ENCODE measurements at regions of chr22 and their contacts with region 1.

Region 1: DNA sequence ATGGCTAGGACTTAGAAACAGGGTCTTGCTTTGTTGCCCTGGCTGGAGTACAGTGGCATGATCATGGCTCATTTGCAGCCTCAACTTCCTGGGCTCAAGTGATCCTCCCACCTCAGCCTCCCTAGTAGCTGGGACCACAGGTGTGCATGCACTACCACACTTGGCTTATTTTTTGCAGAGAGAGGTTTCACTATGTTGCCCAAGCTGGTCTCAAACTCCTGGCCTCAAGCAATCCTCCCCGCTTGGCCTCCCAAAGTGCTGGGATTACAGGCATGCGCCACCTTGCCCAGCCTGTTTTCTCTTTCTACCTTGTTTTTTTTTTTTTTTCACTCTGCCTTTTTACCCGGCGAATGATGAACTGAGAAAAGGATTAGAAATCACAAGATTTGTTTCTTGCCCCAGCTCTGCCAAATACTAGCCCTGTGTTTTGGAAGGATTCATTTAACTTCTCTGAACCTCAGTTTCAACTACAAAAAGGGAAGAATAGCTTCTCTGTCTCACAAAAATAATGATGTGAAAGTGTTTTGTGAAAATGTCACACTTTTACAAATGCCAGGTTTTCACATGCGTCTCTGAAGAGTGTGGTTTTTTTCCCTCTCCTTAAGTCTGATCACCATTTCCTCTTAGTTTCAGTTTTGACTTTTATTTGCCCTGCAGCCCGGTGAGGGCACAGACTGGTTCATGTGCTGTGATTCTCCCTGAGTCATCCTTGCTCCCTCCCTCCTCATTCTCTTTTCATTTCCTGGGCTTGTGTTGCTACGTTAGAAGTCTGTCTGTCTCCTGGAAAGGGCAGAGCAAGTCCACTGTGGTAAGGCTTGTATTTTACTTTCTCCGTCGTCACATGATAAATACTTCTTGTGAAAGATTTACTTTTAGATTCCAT is 67.7 kb downstream of the BCL2L13 start:
- DNase-seq: peak; percentile 67
- H3K4me3 Mint-ChIP-seq: peak overlapping the region; percentile 49
- H3K27ac Mint-ChIP-seq: peak overlapping the region; percentile 89
- H3K4me1 Mint-ChIP-seq: peaks cover 20% of the 10 kb centered on the region
- H3K27me3 Mint-ChIP-seq: no peaks in the 10 kb centered on the region

Region 2: GRCh38 chr22:17628304-17629166 is 77.7 kb before region 1 on chr22 and contains the start of gene ATP6V1E1:
- CTCF ChIA-PET with region 1: no interaction called
- intact Hi-C with region 1: loop called (anchors 5 kb)
- DNase-seq: peak; percentile 98
- H3K4me3 Mint-ChIP-seq: peak within 1 kb of the TSS; percentile 98
- H3K27ac Mint-ChIP-seq: peak within 1 kb of the TSS; percentile 92
- H3K4me1 Mint-ChIP-seq: peaks cover 26% of the 10 kb centered on the region
- H3K27me3 Mint-ChIP-seq: no peaks in the 10 kb centered on the region
- total RNA-seq, gene ATP6V1E1: 74.5 to 75.5 TPM

Region 3: DNA sequence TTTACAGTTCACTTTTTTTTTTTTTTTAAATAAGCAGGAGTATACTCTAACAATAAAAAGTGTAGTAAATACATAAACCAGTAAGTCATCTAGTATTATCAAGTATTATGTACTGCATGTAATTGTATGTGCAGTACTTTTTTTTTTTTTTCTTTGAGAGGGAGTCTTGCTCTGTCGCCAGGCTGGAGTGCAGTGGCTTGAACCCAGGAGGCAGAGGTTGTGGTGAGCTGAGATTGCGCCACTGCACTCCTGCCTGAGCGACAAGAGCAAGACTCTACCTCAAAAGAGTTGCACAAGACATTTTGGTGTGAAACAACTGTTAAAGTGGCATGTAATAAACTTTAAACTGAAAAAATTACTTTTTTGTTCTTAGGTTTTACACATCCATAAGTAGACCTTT is 51.0 kb before region 1 on chr22:
- CTCF ChIA-PET with region 1: no interaction called
- intact Hi-C with region 1: no loop called
- DNase-seq: no peak
- H3K4me3 Mint-ChIP-seq: no peak overlapping the region
- H3K27ac Mint-ChIP-seq: no peak overlapping the region
- H3K4me1 Mint-ChIP-seq: peaks cover 3% of the 10 kb centered on the region
- H3K27me3 Mint-ChIP-seq: no peaks in the 10 kb centered on the region

Region 4: DNA sequence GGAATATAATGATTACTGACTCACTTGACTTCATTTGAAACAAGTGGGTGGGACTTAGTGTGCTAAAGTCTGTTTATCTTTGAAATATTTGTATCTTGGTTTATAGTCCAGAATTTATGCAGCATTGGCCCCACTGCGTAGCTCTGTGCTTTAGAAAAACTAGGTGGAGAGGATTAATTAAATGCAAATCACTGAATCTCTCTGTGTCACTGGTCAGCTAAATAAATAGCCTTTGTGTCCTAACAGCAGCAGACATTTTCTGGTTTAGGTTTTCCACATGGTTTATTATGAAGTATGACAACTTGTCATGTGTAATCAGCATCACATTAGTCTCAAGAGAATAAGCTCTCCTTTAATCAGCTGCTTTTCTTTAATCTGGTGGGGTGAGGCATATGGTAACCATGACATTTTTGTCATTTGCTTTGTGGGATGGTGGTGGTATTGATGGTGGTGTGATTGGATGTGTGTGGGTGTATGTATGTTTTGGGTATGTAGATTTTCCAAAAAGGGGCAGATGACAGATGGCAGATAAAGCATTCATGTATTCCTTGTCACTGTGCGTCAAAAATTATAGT is 33.8 kb before region 1 on chr22:
- CTCF ChIA-PET with region 1: no interaction called
- intact Hi-C with region 1: loop called (anchors 2 kb)
- DNase-seq: no peak
- H3K4me3 Mint-ChIP-seq: no peak overlapping the region
- H3K27ac Mint-ChIP-seq: peak overlapping the region; percentile 26
- H3K4me1 Mint-ChIP-seq: peaks cover 28% of the 10 kb centered on the region
- H3K27me3 Mint-ChIP-seq: no peaks in the 10 kb centered on the region

Region 5: GRCh38 chr22:17767233-17768065 is 61.2 kb after region 1 on chr22:
- CTCF ChIA-PET with region 1: no interaction called
- intact Hi-C with region 1: loop called (anchors 5 kb)
- DNase-seq: peak; percentile 73
- H3K4me3 Mint-ChIP-seq: peak overlapping the region; percentile 11
- H3K27ac Mint-ChIP-seq: no peak overlapping the region
- H3K4me1 Mint-ChIP-seq: peaks cover 58% of the 10 kb centered on the region
- H3K27me3 Mint-ChIP-seq: no peaks in the 10 kb centered on the region

Measured in activated naive CD4-positive, alpha-beta T cell treated with anti-CD3 and anti-CD28 coated beads for 36 hours (primary cell).